HCT116 (cell line): ENCODE measurements at regions of chr5 and their contacts with region 1.

Region 1: GRCh38 chr5:96601811-96602244 is 60.3 kb upstream of the CAST start:
- DNase-seq: peak; percentile 53
- ATAC-seq: peak; percentile 97
- H3K4me3 ChIP-seq: no peak overlapping the region
- H3K27ac ChIP-seq: no peak overlapping the region
- H3K4me1 ChIP-seq: no peaks in the 10 kb centered on the region
- H3K27me3 ChIP-seq: 0 out of 2 replicates have a peak, but pooled peaks cover 4% of the 10 kb centered on the region
- CTCF ChIP-seq: peak; percentile 71 to 86 (median 75)
- POLR2A ChIP-seq: no peak
- RAD21 ChIP-seq: peak; percentile 74

Region 2: GRCh38 chr5:95858661-95859326 is 743.0 kb before region 1 on chr5:
- CTCF ChIA-PET with region 1: no interaction called
- POLR2A ChIA-PET with region 1: no interaction called
- RAD21 ChIA-PET with region 1: no interaction called
- intact Hi-C with region 1: loop called (anchors 1 kb)
- DNase-seq: peak; percentile 71
- ATAC-seq: peak; percentile 96
- H3K4me3 ChIP-seq: peak overlapping the region; percentile 24 to 49
- H3K27ac ChIP-seq: no peak overlapping the region
- H3K4me1 ChIP-seq: peaks cover 6 to 40% of the 10 kb centered on the region in 2 experiments; a peak in 3 of 4 replicates
- H3K27me3 ChIP-seq: no peaks in the 10 kb centered on the region
- CTCF ChIP-seq: peak; percentile 90 to 98 (median 95)
- POLR2A ChIP-seq: no peak
- RAD21 ChIP-seq: peak; percentile 99

Region 3: GRCh38 chr5:96388176-96388575 is 213.7 kb before region 1 on chr5:
- CTCF ChIA-PET with region 1: no interaction called
- POLR2A ChIA-PET with region 1: no interaction called
- RAD21 ChIA-PET with region 1: no interaction called
- intact Hi-C with region 1: no loop called
- DNase-seq: no peak
- ATAC-seq: no peak
- H3K4me3 ChIP-seq: no peak overlapping the region
- H3K27ac ChIP-seq: no peak overlapping the region
- H3K4me1 ChIP-seq: peaks cover 6 to 8% of the 10 kb centered on the region in 2 experiments; a peak in 3 of 4 replicates
- H3K27me3 ChIP-seq: no peaks in the 10 kb centered on the region
- CTCF ChIP-seq: no peak
- POLR2A ChIP-seq: no peak
- RAD21 ChIP-seq: no peak